ENCODE measurements at regions of chr7 and their contacts with region 1.

Region 1: DNA sequence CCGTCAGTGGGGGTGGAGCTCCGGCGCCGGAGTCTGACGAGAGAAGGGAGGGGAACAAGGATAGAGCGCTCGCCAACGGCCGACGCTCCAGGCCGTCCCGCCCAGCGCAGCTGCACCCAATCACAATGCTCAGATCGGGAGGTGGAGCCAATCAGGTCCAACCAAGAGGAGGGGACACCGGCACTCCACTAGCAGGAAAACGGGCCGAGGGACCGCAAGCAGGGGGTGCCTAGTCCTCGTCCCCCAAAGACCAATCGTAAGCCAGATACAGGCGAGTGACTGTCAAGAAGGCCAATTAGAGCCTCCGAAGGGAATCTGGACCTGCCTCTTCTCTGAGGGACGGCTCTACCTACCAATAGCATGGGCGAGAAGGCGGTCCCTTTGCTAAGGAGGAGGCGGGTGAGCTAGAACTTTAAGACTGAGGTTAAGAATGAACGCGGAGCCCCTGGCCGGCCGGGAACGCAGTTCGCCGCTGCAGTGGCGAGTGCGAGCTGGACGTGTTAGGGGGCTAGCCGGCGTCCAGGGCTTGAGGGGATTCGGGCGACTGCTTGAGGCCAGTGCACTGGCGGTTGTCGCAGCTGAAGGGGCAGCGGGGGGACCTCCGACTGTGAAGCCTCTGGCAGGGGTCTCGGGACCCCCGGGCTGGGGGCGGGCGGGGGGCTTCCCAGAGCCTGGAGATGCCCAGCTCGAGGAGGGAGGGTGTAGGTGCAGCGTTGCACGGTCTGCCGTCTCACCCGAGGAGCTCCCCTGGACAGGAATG is at the start of gene FBXO24:
- DNase-seq: peak; percentile 100
- H3K4me3 ChIP-seq: peak within 1 kb of the TSS; percentile 74
- H3K4me3 Mint-ChIP-seq: peak within 1 kb of the TSS; percentile 86
- H3K27ac Mint-ChIP-seq: peak within 1 kb of the TSS; percentile 93
- H3K4me1 ChIP-seq: peaks cover 13% of the 10 kb centered on the region
- H3K4me1 Mint-ChIP-seq: peaks cover 11% of the 10 kb centered on the region
- H3K27me3 ChIP-seq: no peaks in the 10 kb centered on the region
- H3K27me3 Mint-ChIP-seq: no peaks in the 10 kb centered on the region
- CTCF ChIP-seq: no peak
- total RNA-seq, gene FBXO24: 1.4 and 1.5 TPM in 2 replicates

Region 2: DNA sequence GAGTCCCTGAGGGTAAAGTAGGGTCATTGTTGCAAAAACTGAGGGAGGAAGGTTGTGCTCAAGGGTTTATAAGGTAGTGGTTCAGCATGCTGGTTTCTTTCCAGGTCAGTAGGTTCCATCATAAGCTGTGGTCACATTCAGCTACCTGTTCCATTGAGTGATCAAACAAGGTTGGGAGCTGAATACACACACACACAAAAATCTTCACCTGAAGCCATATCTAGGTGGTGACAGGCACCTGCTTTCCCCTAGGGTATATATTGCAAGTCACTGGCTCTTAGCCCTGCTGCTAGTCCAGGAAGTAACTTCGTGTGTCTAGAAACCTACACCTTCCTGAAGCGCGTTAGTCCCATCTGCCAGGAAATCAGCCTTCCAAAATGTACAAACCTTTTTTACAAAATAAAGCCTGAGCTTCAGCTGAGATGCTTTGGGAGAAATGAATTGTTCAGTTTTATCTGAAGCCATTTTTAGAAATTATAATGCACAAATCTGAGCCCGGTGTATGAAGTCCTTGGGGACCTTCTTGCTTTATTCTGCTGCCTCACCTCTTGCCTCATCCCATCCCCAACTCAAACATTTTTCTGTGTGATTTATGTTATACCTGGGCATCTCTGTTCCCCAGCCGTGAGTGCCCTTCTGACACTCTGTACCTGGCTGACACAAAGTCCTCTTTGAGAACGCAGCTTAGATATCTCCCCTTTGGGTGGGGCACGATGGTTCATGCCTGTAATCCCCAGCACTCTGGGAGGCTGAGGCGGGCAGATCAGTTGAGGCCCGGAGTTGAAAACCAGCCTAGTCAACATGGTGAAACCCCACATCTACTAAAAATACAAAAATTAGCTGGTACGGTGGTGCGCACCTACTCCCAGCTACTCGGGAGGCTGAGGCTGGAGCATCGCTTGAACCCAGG is 448.3 kb before region 1 on chr7:
- CTCF ChIA-PET with region 1: no interaction called
- POLR2A ChIA-PET with region 1: no interaction called
- intact Hi-C with region 1: no loop called
- DNase-seq: no peak
- H3K4me3 ChIP-seq: no peak overlapping the region
- H3K4me3 Mint-ChIP-seq: no peak overlapping the region
- H3K27ac Mint-ChIP-seq: no peak overlapping the region
- H3K4me1 ChIP-seq: 0 out of 2 replicates have a peak, but pooled peaks cover 7% of the 10 kb centered on the region
- H3K4me1 Mint-ChIP-seq: peaks cover under 1% of the 10 kb centered on the region
- H3K27me3 ChIP-seq: no peaks in the 10 kb centered on the region
- H3K27me3 Mint-ChIP-seq: no peaks in the 10 kb centered on the region
- CTCF ChIP-seq: no peak

Region 3: DNA sequence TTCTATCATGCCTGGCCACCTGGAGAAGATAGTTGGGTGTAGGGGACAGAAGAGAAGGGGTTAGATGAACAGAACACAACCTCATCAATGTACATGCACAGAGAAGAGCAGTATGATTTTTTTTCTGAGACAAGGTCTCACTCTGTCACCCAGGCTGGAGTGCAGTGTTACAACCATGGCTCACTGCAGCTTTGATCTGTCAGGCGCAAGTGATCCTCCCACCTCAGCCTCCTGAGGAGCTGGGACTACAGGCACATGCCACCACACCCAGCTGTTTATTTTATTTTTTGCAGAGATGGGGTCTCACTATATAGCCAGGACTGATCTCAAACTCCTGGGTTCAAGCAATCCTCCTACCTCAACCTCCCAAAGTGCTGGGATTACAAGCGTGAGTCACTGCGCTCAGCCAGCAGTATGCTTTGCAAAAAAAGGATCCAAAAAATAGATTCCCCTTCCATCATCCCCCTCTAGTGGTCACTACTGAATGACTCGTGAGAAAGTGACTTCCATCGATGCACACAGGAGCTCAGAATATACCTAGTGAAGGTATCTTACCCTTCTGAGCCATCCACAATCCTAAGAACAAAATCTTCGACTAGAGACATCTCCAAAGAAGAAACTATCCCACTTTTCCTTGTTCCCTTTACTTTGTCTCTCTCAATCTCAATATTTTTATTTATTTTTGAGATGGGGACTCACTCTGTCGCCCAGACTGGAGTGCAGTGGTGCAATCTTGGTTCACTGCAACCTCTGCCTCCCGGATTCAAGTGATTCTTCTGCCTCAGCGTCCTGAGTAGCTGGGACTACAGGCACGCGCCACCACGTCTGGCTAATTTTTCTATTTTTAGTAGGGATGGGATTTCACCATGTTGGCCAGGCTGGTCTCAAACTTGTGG is 178.9 kb before region 1 on chr7:
- CTCF ChIA-PET with region 1: no interaction called
- POLR2A ChIA-PET with region 1: no interaction called
- intact Hi-C with region 1: no loop called
- DNase-seq: peak; percentile 41 to 71
- H3K4me3 ChIP-seq: no peak overlapping the region
- H3K4me3 Mint-ChIP-seq: no peak overlapping the region
- H3K27ac Mint-ChIP-seq: no peak overlapping the region
- H3K4me1 ChIP-seq: no peaks in the 10 kb centered on the region
- H3K4me1 Mint-ChIP-seq: no peaks in the 10 kb centered on the region
- H3K27me3 ChIP-seq: 0 out of 2 replicates have a peak, but pooled peaks cover 1% of the 10 kb centered on the region
- H3K27me3 Mint-ChIP-seq: peaks cover 3% of the 10 kb centered on the region
- CTCF ChIP-seq: peak; percentile 56 to 74

Region 4: DNA sequence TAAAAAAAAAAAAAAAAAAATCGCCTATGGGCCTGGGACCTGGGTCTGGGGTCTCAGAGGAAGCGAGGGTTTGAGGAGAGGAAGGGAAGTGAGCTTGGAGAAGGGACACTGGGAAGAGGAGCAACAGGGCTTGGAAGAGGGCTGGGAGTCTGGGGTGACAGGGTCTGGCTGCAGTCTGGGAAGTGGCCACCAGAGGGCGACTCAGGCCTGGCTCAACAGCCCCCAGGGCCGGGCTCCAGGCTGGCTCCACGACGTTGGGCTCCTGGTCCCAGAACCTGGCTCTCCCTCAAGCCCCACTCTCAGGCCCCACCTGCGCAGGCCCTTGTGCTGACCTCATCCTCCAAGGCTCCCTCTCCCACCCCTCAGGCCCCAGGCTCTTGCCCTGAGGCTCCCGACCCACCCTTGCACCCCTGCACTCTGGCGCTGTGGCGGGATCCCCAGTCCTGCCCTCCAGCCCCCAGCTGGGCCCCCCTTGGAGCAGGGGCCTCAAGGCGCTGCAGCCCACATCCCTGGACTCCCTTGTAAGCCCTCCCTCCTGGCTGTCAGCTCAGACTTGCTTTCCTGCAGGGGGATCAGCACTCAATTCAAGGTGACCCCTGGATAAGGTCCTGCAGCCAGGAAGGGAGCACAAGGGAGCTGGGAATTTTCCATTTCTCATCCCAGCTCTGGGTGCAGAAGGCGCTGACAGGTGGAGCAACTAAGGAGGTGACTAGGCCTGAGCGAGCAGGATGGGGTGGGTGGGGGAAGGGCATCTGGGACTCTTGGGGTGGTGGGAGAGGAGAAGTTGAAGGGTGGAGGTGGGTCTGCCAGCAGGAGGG is 117.0 kb before region 1 on chr7:
- CTCF ChIA-PET with region 1: interaction called, 11 read pairs
- POLR2A ChIA-PET with region 1: no interaction called
- intact Hi-C with region 1: loop called (anchors 1 kb)
- DNase-seq: peak; percentile 86 to 92
- H3K4me3 ChIP-seq: no peak overlapping the region
- H3K4me3 Mint-ChIP-seq: no peak overlapping the region
- H3K27ac Mint-ChIP-seq: no peak overlapping the region
- H3K4me1 ChIP-seq: peaks cover 4% of the 10 kb centered on the region; the same call in 1 of the 2 replicates
- H3K4me1 Mint-ChIP-seq: no peaks in the 10 kb centered on the region
- H3K27me3 ChIP-seq: no peaks in the 10 kb centered on the region
- H3K27me3 Mint-ChIP-seq: no peaks in the 10 kb centered on the region
- CTCF ChIP-seq: peak; percentile 97 to 98

Region 5: DNA sequence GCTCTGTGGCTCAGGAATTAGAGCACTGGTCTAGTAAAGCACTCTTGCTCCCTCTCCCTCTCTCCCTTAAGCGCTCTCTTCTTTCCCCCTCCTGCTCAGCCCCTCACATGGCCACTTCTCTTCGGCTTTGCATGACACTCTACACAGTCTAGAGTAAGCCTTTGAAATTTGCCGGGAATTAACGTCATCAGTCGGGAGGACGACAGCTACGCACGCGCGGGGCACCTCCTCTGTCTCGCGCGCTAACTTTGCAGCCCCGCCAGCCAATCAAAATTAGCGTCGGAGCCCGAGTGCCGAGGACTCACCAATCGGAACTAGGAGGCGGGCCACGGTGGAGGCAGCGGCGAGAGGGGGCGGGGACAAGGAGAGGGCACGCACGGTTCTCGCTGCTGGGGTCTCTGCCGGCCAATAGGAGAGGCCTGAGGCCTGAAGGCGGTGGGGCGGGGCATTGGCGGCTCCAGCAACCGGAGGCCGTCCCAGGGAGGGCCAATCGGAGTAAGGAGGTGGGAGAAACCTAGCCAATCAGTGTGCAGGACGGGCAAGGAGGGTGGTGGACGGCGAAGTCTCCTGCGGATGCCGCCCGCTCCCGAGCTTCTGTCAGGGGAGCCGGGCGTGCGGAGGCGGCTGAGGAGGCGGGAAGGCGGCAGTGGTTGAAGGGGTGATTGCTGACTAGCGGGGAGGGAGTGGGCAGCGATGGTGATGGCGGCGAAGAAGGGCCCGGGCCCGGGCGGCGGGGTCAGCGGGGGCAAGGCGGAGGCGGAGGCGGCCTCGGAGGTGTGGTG is 47.6 kb before region 1 on chr7 and contains the start of gene AGFG2:
- CTCF ChIA-PET with region 1: interaction called, 4 read pairs
- POLR2A ChIA-PET with region 1: interaction called, 27 read pairs
- intact Hi-C with region 1: loop called (anchors 1 kb)
- DNase-seq: peak; percentile 100
- H3K4me3 ChIP-seq: peak within 1 kb of the TSS; percentile 89
- H3K4me3 Mint-ChIP-seq: peak within 1 kb of the TSS; percentile 87
- H3K27ac Mint-ChIP-seq: peak within 1 kb of the TSS; percentile 72
- H3K4me1 ChIP-seq: peaks cover 37% of the 10 kb centered on the region
- H3K4me1 Mint-ChIP-seq: peaks cover 22% of the 10 kb centered on the region
- H3K27me3 ChIP-seq: no peaks in the 10 kb centered on the region
- H3K27me3 Mint-ChIP-seq: no peaks in the 10 kb centered on the region
- CTCF ChIP-seq: no peak
- total RNA-seq, gene AGFG2: 58.5 and 60.7 TPM in 2 replicates

Region 6: GRCh38 chr7:100604028-100604975 is 17.9 kb after region 1 on chr7:
- CTCF ChIA-PET with region 1: interaction called, 7 read pairs
- POLR2A ChIA-PET with region 1: interaction called, 10 read pairs
- intact Hi-C with region 1: loop called (anchors 2 kb)
- DNase-seq: peak; percentile 86 to 89
- H3K4me3 ChIP-seq: peak overlapping the region; percentile 67
- H3K4me3 Mint-ChIP-seq: peak overlapping the region; percentile 91
- H3K27ac Mint-ChIP-seq: peak overlapping the region; percentile 74
- H3K4me1 ChIP-seq: peaks cover 16% of the 10 kb centered on the region
- H3K4me1 Mint-ChIP-seq: no peaks in the 10 kb centered on the region
- H3K27me3 ChIP-seq: no peaks in the 10 kb centered on the region
- H3K27me3 Mint-ChIP-seq: no peaks in the 10 kb centered on the region
- CTCF ChIP-seq: peak; percentile 54 to 74

Region 7: GRCh38 chr7:100673300-100673941 is 87.0 kb after region 1 on chr7 and contains the start of gene GNB2:
- CTCF ChIA-PET with region 1: no interaction called
- POLR2A ChIA-PET with region 1: interaction called, 6 read pairs
- intact Hi-C with region 1: loop called (anchors 1 kb)
- DNase-seq: peak; percentile 100
- H3K4me3 ChIP-seq: peak within 1 kb of the TSS; percentile 100
- H3K4me3 Mint-ChIP-seq: peak within 1 kb of the TSS; percentile 85
- H3K27ac Mint-ChIP-seq: peak within 1 kb of the TSS; percentile 94
- H3K4me1 ChIP-seq: no peaks in the 10 kb centered on the region
- H3K4me1 Mint-ChIP-seq: no peaks in the 10 kb centered on the region
- H3K27me3 ChIP-seq: no peaks in the 10 kb centered on the region
- H3K27me3 Mint-ChIP-seq: no peaks in the 10 kb centered on the region
- CTCF ChIP-seq: no peak
- total RNA-seq, gene GNB2: 200 and 216 TPM in 2 replicates

Region 8: DNA sequence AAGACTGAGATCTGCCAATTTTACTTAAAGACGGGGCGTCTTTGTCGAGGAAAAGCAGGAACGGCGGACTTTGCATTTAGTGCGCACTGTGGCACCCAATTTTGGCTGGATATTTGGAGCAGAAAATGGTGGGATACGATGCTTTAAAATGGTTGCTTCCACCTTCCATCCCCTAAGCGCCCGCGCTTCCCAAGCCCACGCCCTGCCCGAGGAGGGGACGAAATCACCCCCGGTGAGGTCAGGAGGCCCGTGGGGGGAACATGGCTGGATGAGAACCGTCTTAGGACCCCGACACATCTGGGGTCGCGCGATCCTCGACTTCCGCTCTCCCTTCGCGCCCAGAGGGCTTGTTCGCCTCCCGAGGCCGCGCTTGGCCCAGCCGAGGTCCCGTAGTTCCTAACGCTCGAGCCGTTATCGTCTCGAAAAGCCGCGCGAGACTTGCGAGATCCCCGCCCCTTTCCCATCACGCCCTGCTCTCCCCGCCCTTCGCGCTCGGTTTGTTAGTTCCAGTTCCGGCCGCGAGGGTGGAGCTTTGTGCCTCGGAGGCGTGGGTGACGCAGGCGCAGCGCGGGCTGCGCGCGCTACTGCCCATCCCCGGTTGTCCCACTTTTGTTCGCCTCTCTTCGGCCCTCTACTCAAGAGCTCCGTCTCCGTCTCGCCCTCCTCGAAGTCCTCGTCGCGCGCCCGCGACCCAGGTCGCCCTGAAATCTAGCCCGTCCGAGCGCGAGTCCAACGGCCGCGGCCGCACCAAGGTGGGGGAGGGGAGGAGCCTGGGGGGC is 288.3 kb after region 1 on chr7 and contains the start of gene SRRT:
- CTCF ChIA-PET with region 1: interaction called, 7 read pairs
- POLR2A ChIA-PET with region 1: interaction called, 12 read pairs
- intact Hi-C with region 1: no loop called
- DNase-seq: peak; percentile 98 to 99
- H3K4me3 ChIP-seq: peak within 1 kb of the TSS; percentile 81
- H3K4me3 Mint-ChIP-seq: peak within 1 kb of the TSS; percentile 85
- H3K27ac Mint-ChIP-seq: peak within 1 kb of the TSS; percentile 98
- H3K4me1 ChIP-seq: peaks cover 10% of the 10 kb centered on the region; the same call in 1 of the 2 replicates
- H3K4me1 Mint-ChIP-seq: peaks cover 14% of the 10 kb centered on the region
- H3K27me3 ChIP-seq: no peaks in the 10 kb centered on the region
- H3K27me3 Mint-ChIP-seq: no peaks in the 10 kb centered on the region
- CTCF ChIP-seq: peak; percentile 33 to 48
- total RNA-seq, gene SRRT: 211 and 243 TPM in 2 replicates